Prostate gland (tissue), 2 donors: ENCODE measurements at regions of chr6 and their contacts with region 1.

Region 1: DNA sequence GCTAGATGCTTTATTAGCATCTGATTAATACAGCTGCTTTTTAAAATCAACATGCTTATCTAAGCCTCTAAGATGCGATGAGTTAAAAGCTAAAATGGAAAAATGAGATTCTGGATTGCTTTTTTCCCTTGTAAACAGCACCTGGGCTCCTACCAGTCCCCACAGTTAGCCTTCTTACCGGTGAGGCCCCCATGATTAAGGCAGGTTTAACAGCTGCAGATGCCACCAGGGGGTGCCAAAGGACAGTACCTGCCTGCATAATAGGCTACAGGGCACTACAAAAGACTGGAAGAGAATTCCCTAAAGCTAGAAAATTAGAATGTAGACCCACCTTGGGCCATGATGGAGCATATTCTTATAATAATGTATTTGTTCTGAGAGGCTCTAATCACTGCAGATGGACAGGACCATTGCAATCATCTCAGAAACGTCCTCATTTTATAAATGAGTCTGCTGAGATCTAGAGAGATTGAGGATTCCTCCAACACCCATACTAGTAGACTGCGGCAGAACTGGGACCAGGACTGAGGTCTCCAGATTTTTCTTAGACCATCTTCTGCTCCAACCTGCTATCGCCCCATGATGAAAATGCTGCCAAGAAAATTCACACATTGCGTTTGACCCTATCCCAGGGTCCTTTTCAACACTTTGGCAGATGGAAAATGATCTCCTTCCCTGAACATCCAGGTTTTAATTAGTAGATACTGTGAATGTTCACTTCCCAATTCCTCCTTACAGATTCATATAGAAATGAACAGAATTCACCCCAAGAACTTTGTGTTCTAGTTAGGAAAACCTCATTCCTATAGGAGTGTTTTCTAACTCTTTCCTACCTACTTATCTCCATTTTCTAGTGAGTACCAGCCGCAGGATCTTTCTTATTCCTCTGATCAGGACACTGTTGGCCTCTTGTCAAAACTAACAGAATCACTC is 148.8 kb downstream of the RPS12 start:
- DNase-seq: peak; percentile 51
- H3K4me3 ChIP-seq: no peak overlapping the region
- H3K27ac ChIP-seq: no peak overlapping the region
- H3K4me1 ChIP-seq: no peaks in the 10 kb centered on the region
- H3K27me3 ChIP-seq: no peaks in the 10 kb centered on the region
- CTCF ChIP-seq: peak in 3 of 4 experiments; percentile 63 to 71 (median 63)
- POLR2A ChIP-seq: no peak

Region 2: DNA sequence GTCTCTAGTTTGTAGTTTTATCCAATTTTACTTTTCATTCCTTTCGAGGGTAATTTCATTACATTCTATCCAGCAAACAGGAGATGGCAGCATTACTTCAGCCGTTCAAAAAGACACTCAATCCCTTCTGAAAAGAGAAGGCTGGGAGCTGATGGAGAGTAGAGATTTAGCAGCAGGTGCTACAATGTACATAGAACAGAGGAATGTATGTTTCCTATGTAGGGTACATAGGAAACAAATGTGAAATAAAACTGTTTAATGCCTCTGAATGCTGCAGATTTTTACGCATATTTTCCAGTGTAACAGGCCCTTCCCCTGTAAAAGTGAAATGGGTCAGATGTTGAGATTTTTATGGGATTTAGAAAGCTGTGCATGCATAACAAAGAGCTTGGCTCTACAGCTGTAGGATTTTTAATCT is 132.9 kb before region 1 on chr6:
- intact Hi-C with region 1: loop called (anchors 5 kb)
- DNase-seq: no peak
- H3K4me3 ChIP-seq: no peak overlapping the region
- H3K27ac ChIP-seq: no peak overlapping the region
- H3K4me1 ChIP-seq: no peaks in the 10 kb centered on the region
- H3K27me3 ChIP-seq: no peaks in the 10 kb centered on the region
- CTCF ChIP-seq: peak in 3 of 4 experiments; percentile 36 to 55 (median 53)
- POLR2A ChIP-seq: no peak

Region 3: DNA sequence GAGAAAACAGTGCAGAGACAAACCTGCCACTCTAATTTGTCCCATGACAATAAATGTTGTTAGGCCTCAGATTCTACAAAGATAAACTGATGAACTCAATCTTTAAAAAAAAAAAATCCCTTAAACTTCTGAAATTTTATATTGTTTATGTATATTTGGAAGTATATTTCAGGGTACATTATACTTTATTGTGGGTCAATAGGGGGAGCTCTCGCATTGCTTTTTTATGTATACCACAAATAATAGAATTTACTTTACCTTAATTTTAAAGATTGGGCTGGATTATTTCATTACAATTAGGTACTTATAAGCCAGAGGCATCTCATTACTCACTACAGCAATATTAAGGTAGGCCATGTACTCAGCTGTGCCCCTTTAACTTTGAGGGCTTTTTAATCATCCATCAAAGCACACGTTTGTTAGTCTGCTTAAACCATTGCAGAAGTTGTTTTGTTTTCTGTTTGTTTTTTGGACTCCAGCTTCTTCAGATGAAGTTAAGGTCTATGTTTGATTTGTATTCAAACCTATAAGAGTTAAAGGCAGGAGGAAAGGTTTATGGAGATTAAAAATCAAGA is 221.7 kb after region 1 on chr6:
- intact Hi-C with region 1: loop called (anchors 5 kb)
- DNase-seq: no peak
- H3K4me3 ChIP-seq: no peak overlapping the region
- H3K27ac ChIP-seq: no peak overlapping the region
- H3K4me1 ChIP-seq: no peaks in the 10 kb centered on the region
- H3K27me3 ChIP-seq: no peaks in the 10 kb centered on the region
- CTCF ChIP-seq: peak in 3 of 4 experiments; percentile 29 to 35 (median 34)
- POLR2A ChIP-seq: no peak

Region 4: GRCh38 chr6:133512410-133513016 is 549.3 kb after region 1 on chr6:
- intact Hi-C with region 1: loop called (anchors 5 kb)
- DNase-seq: peak; percentile 29
- H3K4me3 ChIP-seq: no peak overlapping the region
- H3K27ac ChIP-seq: no peak overlapping the region
- H3K4me1 ChIP-seq: no peaks in the 10 kb centered on the region
- H3K27me3 ChIP-seq: no peaks in the 10 kb centered on the region
- CTCF ChIP-seq: peak in 3 of 4 experiments; percentile 42 to 61 (median 61)
- POLR2A ChIP-seq: no peak

Region 5: DNA sequence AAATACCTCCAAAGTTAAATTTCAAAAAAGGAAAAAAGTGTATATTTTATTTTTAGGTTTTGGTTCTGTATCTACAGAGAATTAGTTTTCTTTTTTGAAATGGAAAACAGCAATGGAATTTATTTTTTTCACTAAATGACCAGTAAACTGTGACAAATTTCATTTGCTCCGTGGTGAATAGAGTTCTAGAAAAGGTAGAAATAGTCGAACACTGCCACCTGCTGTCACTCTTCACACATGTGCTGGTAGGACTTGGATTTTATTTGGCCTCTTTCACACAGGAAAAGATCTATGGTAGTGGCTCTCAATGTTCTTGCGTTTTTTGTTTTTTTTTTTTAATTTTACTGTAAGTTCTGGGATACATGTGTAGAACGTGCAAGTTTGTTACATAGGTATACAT is 590.5 kb after region 1 on chr6:
- intact Hi-C with region 1: loop called (anchors 5 kb)
- DNase-seq: peak; percentile 19
- H3K4me3 ChIP-seq: no peak overlapping the region
- H3K27ac ChIP-seq: no peak overlapping the region
- H3K4me1 ChIP-seq: no peaks in the 10 kb centered on the region
- H3K27me3 ChIP-seq: no peaks in the 10 kb centered on the region
- CTCF ChIP-seq: peak in 3 of 4 experiments; percentile 55 to 59 (median 55)
- POLR2A ChIP-seq: no peak